Vagina (tissue), 2 donors: ENCODE measurements at regions of chr12 and their contacts with region 1.

Region 1: GRCh38 chr12:55930771-55931316 is at the start of gene DGKA:
- DNase-seq: no peak
- H3K4me3 ChIP-seq: peak within 1 kb of the TSS; percentile 59 to 92
- H3K27ac ChIP-seq: peak within 1 kb of the TSS; percentile 94
- H3K4me1 ChIP-seq: peaks cover 80% of the 10 kb centered on the region
- H3K27me3 ChIP-seq: no peaks in the 10 kb centered on the region
- CTCF ChIP-seq: peak in 2 of 3 experiments; percentile 36 to 51
- POLR2A ChIP-seq: no peak
- total RNA-seq, gene DGKA: 140 TPM

Region 2: DNA sequence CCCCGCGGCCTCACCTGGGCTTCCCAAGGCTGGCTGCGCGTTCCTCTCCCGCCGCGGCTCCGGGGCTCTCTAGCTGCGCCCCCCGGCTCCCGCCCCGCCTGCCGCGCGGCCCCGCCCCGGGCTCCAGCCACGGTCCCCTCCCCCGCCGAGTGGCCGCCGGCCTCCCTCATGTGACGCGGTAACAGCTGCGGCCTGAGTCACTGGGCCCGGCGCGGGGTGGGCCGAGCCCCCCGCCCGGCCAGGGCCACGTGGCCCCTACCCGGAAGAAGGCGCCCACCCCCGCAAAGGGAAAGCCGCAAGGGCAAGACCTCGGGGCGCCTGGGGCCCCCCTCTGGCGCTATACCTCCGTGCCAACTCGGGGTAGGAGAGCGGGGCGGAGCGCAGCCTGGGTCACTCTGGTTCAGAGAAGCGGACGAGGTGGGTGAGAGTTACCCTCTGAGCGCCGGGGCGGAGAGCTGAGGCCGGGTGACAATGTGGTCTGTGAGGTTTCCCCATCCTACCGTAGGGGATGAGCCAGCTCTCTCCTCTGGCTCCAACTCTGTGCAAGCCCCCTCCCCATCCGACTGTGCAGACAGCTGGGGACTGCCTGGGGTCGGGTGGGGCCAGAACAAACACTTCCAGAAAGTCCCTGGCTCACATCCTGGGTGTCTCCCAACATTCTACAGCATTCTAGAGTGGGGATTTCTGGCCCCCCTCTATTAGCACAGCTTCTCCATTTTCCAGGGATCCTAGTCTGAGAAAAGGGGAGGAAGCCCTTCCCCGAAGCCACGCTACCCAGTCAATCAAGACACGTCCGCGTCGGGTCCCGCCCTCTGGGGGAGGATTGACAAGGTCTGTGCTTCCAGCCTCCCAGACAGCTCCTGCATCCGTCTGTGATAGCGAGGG is 201.7 kb before region 1 on chr12 and contains the start of gene CD63:
- intact Hi-C with region 1: loop called (anchors 5 kb)
- DNase-seq: no peak
- H3K4me3 ChIP-seq: peak within 1 kb of the TSS; percentile 67 to 81
- H3K27ac ChIP-seq: peak within 1 kb of the TSS; percentile 100
- H3K4me1 ChIP-seq: peaks cover 46% of the 10 kb centered on the region
- H3K27me3 ChIP-seq: no peaks in the 10 kb centered on the region
- CTCF ChIP-seq: no peak
- POLR2A ChIP-seq: peak in 1 of 2 donors; percentile 88
- total RNA-seq, gene CD63: 568 TPM

Region 3: GRCh38 chr12:55829967-55830600 is 100.8 kb before region 1 on chr12:
- intact Hi-C with region 1: loop called (anchors 5 kb)
- DNase-seq: no peak
- H3K4me3 ChIP-seq: peak overlapping the region; percentile 79 to 87
- H3K27ac ChIP-seq: peak overlapping the region; percentile 91
- H3K4me1 ChIP-seq: peaks cover 73% of the 10 kb centered on the region
- H3K27me3 ChIP-seq: no peaks in the 10 kb centered on the region
- CTCF ChIP-seq: no peak
- POLR2A ChIP-seq: peak in 1 of 2 donors; percentile 5

Region 4: GRCh38 chr12:56127888-56128669 is 197.2 kb after region 1 on chr12 and contains the start of gene ESYT1:
- intact Hi-C with region 1: no loop called
- DNase-seq: peak; percentile 100
- H3K4me3 ChIP-seq: peak within 1 kb of the TSS; percentile 75 to 86
- H3K27ac ChIP-seq: peak within 1 kb of the TSS; percentile 95
- H3K4me1 ChIP-seq: peaks cover 35% of the 10 kb centered on the region
- H3K27me3 ChIP-seq: no peaks in the 10 kb centered on the region
- CTCF ChIP-seq: no peak
- POLR2A ChIP-seq: peak; percentile 76 to 98
- total RNA-seq, gene ESYT1: 140 TPM